Tibial artery (tissue), 4 donors: ENCODE measurements at regions of chr15 and their contacts with region 1.

Region 1: DNA sequence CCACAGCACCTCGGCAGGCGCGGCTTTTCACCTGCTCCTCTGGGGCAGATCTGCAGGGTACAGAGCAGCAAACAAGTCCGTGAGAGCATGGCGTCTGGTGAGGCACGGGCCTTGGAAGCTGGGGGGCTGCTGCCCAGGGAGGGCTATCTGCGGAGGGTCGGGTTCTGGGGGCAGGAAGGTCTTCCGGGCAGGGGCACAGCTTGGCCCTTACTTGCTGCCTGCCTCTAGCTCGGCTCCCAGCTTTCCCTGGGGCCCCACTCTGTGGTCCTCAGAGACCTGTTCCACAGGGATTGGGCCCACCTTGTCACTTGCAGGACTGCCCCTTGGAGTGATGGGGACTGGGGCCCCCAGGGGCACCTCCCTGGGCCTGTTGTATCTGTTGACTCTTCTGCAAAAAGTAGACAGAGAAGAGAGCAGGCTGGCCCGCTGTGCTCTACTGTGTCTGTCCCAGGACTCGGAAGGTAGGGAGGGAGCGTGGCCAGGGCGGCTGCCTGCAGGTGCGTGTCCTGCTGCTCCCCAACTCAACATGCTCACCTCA is 84.1 kb downstream of the TBC1D2B start:
- DNase-seq: no peak
- H3K4me3 ChIP-seq: no peak overlapping the region
- H3K27ac ChIP-seq: peak overlapping the region; percentile 75 to 80
- H3K4me1 ChIP-seq: peaks cover 9 to 72% (median 47%) of the 10 kb centered on the region in 4 donors
- H3K27me3 ChIP-seq: no peaks in the 10 kb centered on the region
- CTCF ChIP-seq: no peak

Region 2: GRCh38 chr15:78065284-78065872 is 71.9 kb after region 1 on chr15:
- intact Hi-C with region 1: no loop called
- DNase-seq: peak; percentile 91 to 94
- H3K4me3 ChIP-seq: peak overlapping the region in 1 of 2 donors; percentile 22
- H3K27ac ChIP-seq: peak overlapping the region; percentile 81 to 87
- H3K4me1 ChIP-seq: peaks cover 0 to 100% (median 80%) of the 10 kb centered on the region in 4 donors
- H3K27me3 ChIP-seq: no peaks in the 10 kb centered on the region
- CTCF ChIP-seq: no peak

Region 3: GRCh38 chr15:78077058-78077877 is 83.8 kb after region 1 on chr15 and contains the start of gene TBC1D2B:
- intact Hi-C with region 1: loop called (anchors 5 kb)
- DNase-seq: peak; percentile 55 to 83
- H3K4me3 ChIP-seq: peak within 1 kb of the TSS; percentile 67 to 97
- H3K27ac ChIP-seq: peak within 1 kb of the TSS; percentile 82 to 95
- H3K4me1 ChIP-seq: peaks cover 0 to 50% (median 35%) of the 10 kb centered on the region in 4 donors
- H3K27me3 ChIP-seq: no peaks in the 10 kb centered on the region
- CTCF ChIP-seq: no peak

Region 4: GRCh38 chr15:78149068-78149804 is 155.8 kb after region 1 on chr15 and contains the start of gene IDH3A:
- intact Hi-C with region 1: loop called (anchors 5 kb)
- DNase-seq: peak; percentile 99
- H3K4me3 ChIP-seq: peak within 1 kb of the TSS; percentile 87 to 96
- H3K27ac ChIP-seq: peak within 1 kb of the TSS; percentile 83 to 87
- H3K4me1 ChIP-seq: peaks cover 0 to 39% (median 18%) of the 10 kb centered on the region in 4 donors
- H3K27me3 ChIP-seq: no peaks in the 10 kb centered on the region
- CTCF ChIP-seq: no peak

Region 5: GRCh38 chr15:78212546-78213424 is 219.3 kb after region 1 on chr15:
- intact Hi-C with region 1: no loop called
- DNase-seq: peak in 1 of 2 donors; percentile 36
- H3K4me3 ChIP-seq: no peak overlapping the region
- H3K27ac ChIP-seq: no peak overlapping the region
- H3K4me1 ChIP-seq: peaks cover 0 to 15% (median 4%) of the 10 kb centered on the region in 4 donors
- H3K27me3 ChIP-seq: peaks cover 0 to 15% of the 10 kb centered on the region in 2 donors
- CTCF ChIP-seq: no peak